Naive thymus-derived CD8-positive, alpha-beta T cell (primary cell): ENCODE measurements at regions of chr1 and their contacts with region 1.

Region 1: DNA sequence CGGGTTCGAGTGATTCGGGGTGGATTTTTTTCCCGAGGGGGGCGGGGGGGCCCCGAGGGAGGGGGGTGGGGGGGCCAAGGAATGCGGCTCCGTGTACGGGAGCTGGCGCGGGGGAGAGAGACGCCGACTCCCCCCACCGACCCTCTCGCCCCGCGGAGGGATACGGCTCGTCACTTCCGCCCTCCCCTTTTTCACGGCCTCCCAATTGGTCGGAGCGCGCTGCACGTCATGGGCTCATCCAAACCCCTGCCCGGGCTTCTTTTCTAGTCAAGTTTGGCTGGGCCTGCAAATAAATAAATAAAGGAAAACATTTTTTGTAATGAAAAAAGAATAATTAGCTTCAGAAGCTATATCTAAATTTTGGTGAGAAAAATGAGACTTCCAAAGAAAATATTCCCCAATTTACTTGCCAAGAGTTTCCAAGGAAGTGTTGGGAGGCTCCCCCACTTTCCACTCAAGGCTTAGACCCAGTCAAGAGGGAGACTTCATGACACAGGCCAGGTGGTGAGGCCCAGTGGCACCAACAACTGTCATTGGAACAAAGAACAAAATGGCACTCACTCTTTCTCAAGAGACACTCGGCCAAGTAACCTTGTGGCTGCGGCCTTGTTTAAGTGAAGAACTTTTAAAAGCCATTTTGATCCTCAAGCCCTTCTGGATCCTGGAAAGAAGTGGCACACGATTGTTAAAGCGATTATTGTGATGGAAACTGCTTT is at the start of gene POGZ:
- DNase-seq: peak; percentile 82 to 97 (median 94)
- ATAC-seq: peak; percentile 58 to 74
- H3K4me3 Mint-ChIP-seq: peak within 1 kb of the TSS; percentile 89 to 96 (median 94)
- H3K27ac Mint-ChIP-seq: peak within 1 kb of the TSS; percentile 92 to 98 (median 95)
- H3K4me1 Mint-ChIP-seq: peaks cover 10 to 32% (median 27%) of the 10 kb centered on the region in 4 donors
- H3K27me3 Mint-ChIP-seq: peaks cover 13 to 27% (median 23%) of the 10 kb centered on the region in 5 donors
- polyA plus RNA-seq, gene POGZ: 5.9 to 9.5 (median 9.0) TPM

Region 2: GRCh38 chr1:151370211-151370911 is 89.1 kb before region 1 on chr1:
- POLR2A ChIA-PET with region 1: no interaction called
- DNase-seq: no peak
- ATAC-seq: no peak
- H3K4me3 Mint-ChIP-seq: no peak overlapping the region
- H3K27ac Mint-ChIP-seq: peak overlapping the region in 1 of 10 donors; percentile 2
- H3K4me1 Mint-ChIP-seq: peaks cover 0 to 4% (median 0%) of the 10 kb centered on the region in 4 donors
- H3K27me3 Mint-ChIP-seq: peaks cover 0 to 4% (median 0%) of the 10 kb centered on the region in 5 donors

Region 3: DNA sequence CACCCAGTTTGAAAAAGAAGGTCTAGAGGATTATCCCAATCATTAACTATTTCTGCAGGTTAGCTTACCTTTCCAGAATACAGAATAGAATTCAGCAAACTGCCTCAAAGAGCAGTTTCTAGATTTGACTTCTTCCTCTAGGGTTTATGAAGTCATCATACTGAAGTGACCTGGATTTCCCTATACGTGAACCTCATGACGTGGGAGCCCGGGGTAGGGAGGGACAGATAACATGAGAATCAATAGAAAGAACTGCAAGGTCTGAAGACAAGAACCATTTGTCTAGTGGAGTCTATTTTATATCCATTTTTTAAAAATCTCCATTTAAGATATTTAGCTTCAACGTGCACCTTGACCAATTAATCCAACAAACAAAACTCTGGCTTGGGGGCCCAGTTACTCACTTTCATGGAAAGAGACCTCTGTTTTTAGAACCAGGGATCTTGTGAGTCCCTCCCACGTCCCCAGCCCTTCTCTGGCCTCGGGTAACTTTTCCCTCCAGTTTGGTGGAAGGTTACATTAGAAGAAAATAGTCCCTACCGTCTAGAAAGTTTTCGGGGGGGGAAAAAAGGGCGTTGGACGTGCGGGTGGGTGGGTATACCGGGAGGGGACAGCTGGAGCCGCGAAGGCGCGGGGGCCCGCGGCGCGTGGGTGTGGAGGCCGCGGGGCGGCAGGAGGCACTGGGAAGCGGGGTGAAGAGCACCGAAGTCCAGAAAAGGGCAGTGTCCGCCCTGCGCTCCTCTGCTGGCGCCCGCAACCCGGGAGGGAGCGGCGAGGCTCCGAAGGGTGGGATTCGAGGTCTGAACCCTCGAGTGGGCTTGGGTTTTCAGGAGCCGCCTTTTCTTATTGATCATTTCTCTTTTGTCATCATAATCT is 13.6 kb after region 1 on chr1:
- POLR2A ChIA-PET with region 1: interaction called, 39 read pairs
- DNase-seq: peak in 7 of 10 donors; percentile 6 to 33 (median 20)
- ATAC-seq: peak; percentile 36 to 91
- H3K4me3 Mint-ChIP-seq: peak overlapping the region; percentile 69 to 89 (median 83)
- H3K27ac Mint-ChIP-seq: peak overlapping the region; percentile 7 to 87 (median 74)
- H3K4me1 Mint-ChIP-seq: peaks cover 5 to 12% (median 8%) of the 10 kb centered on the region in 4 donors
- H3K27me3 Mint-ChIP-seq: peaks cover 0 to 8% (median 4%) of the 10 kb centered on the region in 5 donors

Region 4: GRCh38 chr1:151494741-151495281 is 35.3 kb after region 1 on chr1:
- POLR2A ChIA-PET with region 1: no interaction called
- DNase-seq: no peak
- ATAC-seq: peak in 1 of 2 donors; percentile 25
- H3K4me3 Mint-ChIP-seq: no peak overlapping the region
- H3K27ac Mint-ChIP-seq: no peak overlapping the region
- H3K4me1 Mint-ChIP-seq: peaks cover 0 to 3% (median 1%) of the 10 kb centered on the region in 4 donors
- H3K27me3 Mint-ChIP-seq: no peaks in the 10 kb centered on the region